ENCODE measurements at regions of chr6 and their contacts with region 1.

Region 1: GRCh38 chr6:37566111-37566949 is 66.6 kb upstream of the CCDC167 start:
- DNase-seq: peak; percentile 86
- ATAC-seq: peak; percentile 78
- H3K4me3 Mint-ChIP-seq: peak overlapping the region; percentile 76
- H3K27ac Mint-ChIP-seq: no peak overlapping the region
- H3K4me1 Mint-ChIP-seq: peaks cover 15% of the 10 kb centered on the region
- H3K27me3 Mint-ChIP-seq: 0 out of 2 replicates have a peak, but pooled peaks cover 5% of the 10 kb centered on the region
- CTCF ChIP-seq: peak; percentile 83

Region 2: GRCh38 chr6:37483917-37484785 is 82.2 kb before region 1 on chr6:
- CTCF ChIA-PET with region 1: interaction called, 34 read pairs
- POLR2A ChIA-PET with region 1: no interaction called
- DNase-seq: peak; percentile 82
- ATAC-seq: peak; percentile 78
- H3K4me3 Mint-ChIP-seq: no peak overlapping the region
- H3K27ac Mint-ChIP-seq: no peak overlapping the region
- H3K4me1 Mint-ChIP-seq: peaks cover 21% of the 10 kb centered on the region
- H3K27me3 Mint-ChIP-seq: no peaks in the 10 kb centered on the region
- CTCF ChIP-seq: peak; percentile 72

Region 3: DNA sequence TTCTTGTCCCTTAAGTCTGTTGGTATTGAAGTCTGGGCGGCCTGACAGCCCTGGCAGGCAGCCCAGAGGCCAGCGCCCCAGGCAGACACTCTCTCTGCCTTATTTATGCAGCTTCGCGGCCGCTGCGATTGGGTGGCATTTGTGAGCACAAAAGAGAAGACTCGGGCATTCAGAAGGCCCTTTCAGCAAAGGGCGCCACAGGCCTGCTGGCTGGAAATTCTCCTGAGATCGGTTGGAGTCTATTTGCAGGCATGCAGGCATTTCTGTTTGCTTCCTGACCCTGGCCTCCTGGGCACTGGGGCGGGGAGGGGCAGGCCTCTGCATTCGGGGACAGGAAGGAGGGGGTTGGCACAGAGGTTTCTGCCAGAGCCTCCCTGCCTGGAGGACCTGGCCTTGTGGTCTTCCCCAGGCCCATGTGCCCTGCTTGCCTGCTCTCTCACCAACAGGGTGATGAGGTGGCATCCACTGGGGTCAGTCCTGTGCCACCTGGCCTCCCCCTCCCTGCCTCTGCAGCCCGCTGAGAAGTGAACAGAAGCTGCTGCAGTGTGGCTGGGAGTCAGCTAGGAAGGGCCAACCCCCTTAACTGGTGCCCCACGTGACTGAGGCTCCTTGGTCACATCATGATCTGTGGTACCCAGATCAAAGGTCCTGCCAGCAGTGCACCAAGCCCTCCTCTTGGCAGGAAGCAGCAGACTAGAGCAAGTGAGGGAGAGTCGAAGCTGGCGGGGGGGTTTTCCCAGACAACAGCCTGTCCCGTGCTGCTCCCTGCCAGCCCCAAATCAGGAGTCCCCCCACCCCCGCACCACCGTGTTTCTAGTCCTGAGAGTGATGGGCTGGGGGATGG is 50.0 kb before region 1 on chr6:
- CTCF ChIA-PET with region 1: interaction called, 23 read pairs
- POLR2A ChIA-PET with region 1: interaction called, 4 read pairs
- DNase-seq: peak; percentile 28
- ATAC-seq: peak; percentile 13
- H3K4me3 Mint-ChIP-seq: 0 out of 2 replicates have a peak overlapping the region, but pooled peaks have one; percentile 14
- H3K27ac Mint-ChIP-seq: no peak overlapping the region
- H3K4me1 Mint-ChIP-seq: peaks cover 61% of the 10 kb centered on the region
- H3K27me3 Mint-ChIP-seq: peaks cover 43% of the 10 kb centered on the region
- CTCF ChIP-seq: no peak

Region 4: GRCh38 chr6:37547564-37548061 is 18.7 kb before region 1 on chr6:
- CTCF ChIA-PET with region 1: interaction called, 39 read pairs
- POLR2A ChIA-PET with region 1: interaction called, 3 read pairs
- DNase-seq: no peak
- ATAC-seq: no peak
- H3K4me3 Mint-ChIP-seq: no peak overlapping the region
- H3K27ac Mint-ChIP-seq: peak overlapping the region; percentile 74; the same call in 1 of the 2 replicates
- H3K4me1 Mint-ChIP-seq: peaks cover 16% of the 10 kb centered on the region
- H3K27me3 Mint-ChIP-seq: no peaks in the 10 kb centered on the region
- CTCF ChIP-seq: no peak

Region 5: GRCh38 chr6:37587866-37588734 is 21.8 kb after region 1 on chr6:
- CTCF ChIA-PET with region 1: interaction called, 19 read pairs
- POLR2A ChIA-PET with region 1: interaction called, 3 read pairs
- DNase-seq: peak; percentile 39
- ATAC-seq: peak; percentile 53
- H3K4me3 Mint-ChIP-seq: no peak overlapping the region
- H3K27ac Mint-ChIP-seq: no peak overlapping the region
- H3K4me1 Mint-ChIP-seq: peaks cover 14% of the 10 kb centered on the region
- H3K27me3 Mint-ChIP-seq: no peaks in the 10 kb centered on the region
- CTCF ChIP-seq: no peak

Region 6: DNA sequence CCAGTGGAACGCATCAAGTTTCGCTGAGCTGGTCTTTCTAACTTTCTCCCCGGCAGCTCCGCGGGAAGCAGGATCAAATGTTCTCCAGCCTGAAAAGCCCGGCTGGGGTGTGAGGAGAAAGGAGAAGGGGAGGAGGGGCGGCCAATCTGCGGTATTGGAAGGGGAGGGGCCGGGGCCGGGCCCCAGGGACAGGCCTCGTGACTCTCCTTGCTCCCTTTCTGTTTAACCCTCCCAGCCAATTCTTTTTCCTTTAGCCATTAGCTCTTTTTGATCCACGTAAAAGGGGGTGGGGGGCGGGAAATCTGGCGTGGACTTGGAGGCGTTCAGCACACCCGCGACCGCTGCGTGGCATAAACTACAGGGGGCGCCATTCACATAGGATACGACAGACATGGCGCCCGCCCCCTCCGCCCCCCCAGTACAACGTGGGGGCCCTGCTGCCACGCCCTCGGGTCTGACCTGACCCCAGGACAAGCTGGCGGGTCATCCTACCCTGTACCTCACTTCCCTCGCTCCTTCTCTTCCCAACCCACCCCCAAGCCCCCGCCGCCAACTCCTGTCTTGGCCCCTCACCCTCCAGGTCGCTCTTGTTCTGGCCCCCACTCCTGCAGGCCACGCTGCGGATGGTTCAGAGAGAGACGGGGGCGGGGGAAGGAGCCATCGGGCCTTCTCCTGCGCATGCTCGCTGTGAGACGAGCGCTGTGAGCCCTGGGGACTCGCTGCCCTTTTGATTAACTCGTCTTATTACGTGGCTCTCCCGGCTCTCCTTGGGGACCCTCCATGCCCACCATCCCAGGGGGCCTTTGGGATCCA is 139.1 kb after region 1 on chr6:
- CTCF ChIA-PET with region 1: interaction called, 10 read pairs
- POLR2A ChIA-PET with region 1: no interaction called
- DNase-seq: peak; percentile 87
- ATAC-seq: peak; percentile 77
- H3K4me3 Mint-ChIP-seq: peak overlapping the region; percentile 72
- H3K27ac Mint-ChIP-seq: peak overlapping the region; percentile 97
- H3K4me1 Mint-ChIP-seq: peaks cover 16% of the 10 kb centered on the region
- H3K27me3 Mint-ChIP-seq: peaks cover 52% of the 10 kb centered on the region
- CTCF ChIP-seq: peak; percentile 76

Region 7: GRCh38 chr6:39402239-39402751 is 1836.0 kb after region 1 on chr6:
- CTCF ChIA-PET with region 1: no interaction called
- POLR2A ChIA-PET with region 1: no interaction called
- DNase-seq: no peak
- ATAC-seq: no peak
- H3K4me3 Mint-ChIP-seq: no peak overlapping the region
- H3K27ac Mint-ChIP-seq: no peak overlapping the region
- H3K4me1 Mint-ChIP-seq: no peaks in the 10 kb centered on the region
- H3K27me3 Mint-ChIP-seq: no peaks in the 10 kb centered on the region
- CTCF ChIP-seq: no peak